MCF 10A (cell line): ENCODE measurements at regions of chr2 and their contacts with region 1.

Region 1: GRCh38 chr2:73651586-73652230 is 9.5 kb upstream of the NAT8 start:
- DNase-seq: no peak
- H3K4me3 Mint-ChIP-seq: no peak overlapping the region
- H3K27ac Mint-ChIP-seq: no peak overlapping the region
- H3K4me1 Mint-ChIP-seq: no peaks in the 10 kb centered on the region
- H3K27me3 Mint-ChIP-seq: peaks cover 17% of the 10 kb centered on the region
- CTCF ChIP-seq: no peak

Region 2: DNA sequence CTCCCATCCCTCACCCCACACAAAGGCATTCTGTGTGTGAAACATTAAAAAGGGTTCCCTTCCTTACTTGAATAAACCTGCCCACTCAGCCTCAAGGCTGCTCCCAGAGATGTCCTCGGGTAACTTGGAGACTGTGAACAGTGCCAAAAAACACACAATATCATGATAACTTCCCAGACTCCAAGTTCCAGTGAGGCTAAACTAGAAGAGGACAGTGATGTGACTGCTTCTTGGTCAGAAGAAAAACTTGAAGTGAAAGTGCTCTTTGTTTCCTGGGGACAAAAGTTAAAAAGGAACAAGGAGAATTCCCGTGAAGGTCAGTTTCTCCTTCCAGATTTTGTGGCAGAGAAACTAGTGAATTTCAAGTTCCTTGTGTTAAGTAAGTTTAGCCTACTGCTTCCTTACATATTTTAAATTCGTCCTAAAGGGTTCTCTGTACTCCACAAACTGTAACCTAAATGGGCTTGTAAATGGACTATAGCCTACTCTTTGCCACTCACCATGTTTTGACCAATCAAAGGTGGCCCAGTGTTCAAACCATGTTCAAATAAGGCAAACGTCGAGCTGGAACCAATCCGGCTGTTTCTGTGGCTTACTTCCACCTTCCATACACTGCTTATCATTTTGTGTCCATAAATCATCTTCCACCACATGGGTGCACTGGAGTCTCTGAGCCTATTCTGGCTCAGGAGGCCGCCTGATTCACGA is 65.0 kb after region 1 on chr2:
- CTCF ChIA-PET with region 1: no interaction called
- POLR2A ChIA-PET with region 1: no interaction called
- intact Hi-C with region 1: loop called (anchors 2 kb)
- DNase-seq: peak; percentile 33
- H3K4me3 Mint-ChIP-seq: no peak overlapping the region
- H3K27ac Mint-ChIP-seq: no peak overlapping the region
- H3K4me1 Mint-ChIP-seq: peaks cover 6% of the 10 kb centered on the region
- H3K27me3 Mint-ChIP-seq: peaks cover 21% of the 10 kb centered on the region
- CTCF ChIP-seq: no peak

Region 3: GRCh38 chr2:73818296-73818695 is 166.6 kb after region 1 on chr2:
- CTCF ChIA-PET with region 1: no interaction called
- POLR2A ChIA-PET with region 1: no interaction called
- intact Hi-C with region 1: no loop called
- DNase-seq: no peak
- H3K4me3 Mint-ChIP-seq: no peak overlapping the region
- H3K27ac Mint-ChIP-seq: no peak overlapping the region
- H3K4me1 Mint-ChIP-seq: no peaks in the 10 kb centered on the region
- H3K27me3 Mint-ChIP-seq: no peaks in the 10 kb centered on the region
- CTCF ChIP-seq: no peak

Region 4: GRCh38 chr2:74343316-74343715 is 691.6 kb after region 1 on chr2 and contains the start of gene SLC4A5:
- CTCF ChIA-PET with region 1: no interaction called
- POLR2A ChIA-PET with region 1: no interaction called
- intact Hi-C with region 1: no loop called
- DNase-seq: no peak
- H3K4me3 Mint-ChIP-seq: no peak within 1 kb of the TSS
- H3K27ac Mint-ChIP-seq: no peak within 1 kb of the TSS
- H3K4me1 Mint-ChIP-seq: no peaks in the 10 kb centered on the region
- H3K27me3 Mint-ChIP-seq: peaks cover 14% of the 10 kb centered on the region
- CTCF ChIP-seq: no peak
- total RNA-seq, gene SLC4A5: 0.12 and 0.70 TPM in 2 replicates